ENCODE measurements at regions of chr6 and their contacts with region 1.

Region 1: DNA sequence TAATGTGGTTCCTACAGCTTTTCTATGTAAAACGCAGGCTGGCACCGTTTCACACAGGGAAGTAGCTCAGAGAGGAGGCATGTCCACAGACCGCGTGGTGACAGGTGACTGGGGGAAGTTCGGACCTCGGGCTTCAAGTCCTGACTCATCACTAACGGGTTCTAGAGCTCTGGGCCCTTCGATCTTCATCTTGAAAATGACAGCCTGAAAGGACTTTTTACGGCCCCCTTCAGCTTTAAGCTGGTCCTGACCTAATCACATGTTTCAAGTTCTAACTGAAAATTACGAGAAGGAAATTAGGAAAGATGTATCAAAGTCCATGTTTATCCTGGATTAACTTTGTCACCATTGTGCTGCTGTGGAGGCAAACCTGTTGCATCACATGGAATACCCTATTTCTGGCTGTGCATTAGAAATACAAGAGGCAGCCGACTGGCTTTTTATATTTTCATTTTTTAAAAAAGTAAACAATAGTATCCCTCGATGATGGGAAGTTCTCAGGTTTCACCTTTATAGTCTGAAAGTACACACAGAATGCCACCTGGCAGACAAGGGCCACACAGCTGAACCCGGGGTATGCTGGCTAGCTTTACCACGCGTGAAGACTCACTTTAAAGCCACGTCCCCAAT is 2.0 kb downstream of the MAN1A1 start:
- DNase-seq: peak; percentile 12
- H3K4me3 Mint-ChIP-seq: peak overlapping the region; percentile 88
- H3K27ac Mint-ChIP-seq: peak overlapping the region; percentile 88
- H3K4me1 Mint-ChIP-seq: peaks cover 57% of the 10 kb centered on the region
- H3K27me3 Mint-ChIP-seq: no peaks in the 10 kb centered on the region

Region 2: GRCh38 chr6:119313937-119314884 is 33.4 kb before region 1 on chr6:
- CTCF ChIA-PET with region 1: interaction called, 19 read pairs
- POLR2A ChIA-PET with region 1: interaction called, 3 read pairs
- DNase-seq: peak; percentile 48
- H3K4me3 Mint-ChIP-seq: peak overlapping the region; percentile 37
- H3K27ac Mint-ChIP-seq: peak overlapping the region; percentile 91
- H3K4me1 Mint-ChIP-seq: peaks cover 61% of the 10 kb centered on the region
- H3K27me3 Mint-ChIP-seq: no peaks in the 10 kb centered on the region

Region 3: DNA sequence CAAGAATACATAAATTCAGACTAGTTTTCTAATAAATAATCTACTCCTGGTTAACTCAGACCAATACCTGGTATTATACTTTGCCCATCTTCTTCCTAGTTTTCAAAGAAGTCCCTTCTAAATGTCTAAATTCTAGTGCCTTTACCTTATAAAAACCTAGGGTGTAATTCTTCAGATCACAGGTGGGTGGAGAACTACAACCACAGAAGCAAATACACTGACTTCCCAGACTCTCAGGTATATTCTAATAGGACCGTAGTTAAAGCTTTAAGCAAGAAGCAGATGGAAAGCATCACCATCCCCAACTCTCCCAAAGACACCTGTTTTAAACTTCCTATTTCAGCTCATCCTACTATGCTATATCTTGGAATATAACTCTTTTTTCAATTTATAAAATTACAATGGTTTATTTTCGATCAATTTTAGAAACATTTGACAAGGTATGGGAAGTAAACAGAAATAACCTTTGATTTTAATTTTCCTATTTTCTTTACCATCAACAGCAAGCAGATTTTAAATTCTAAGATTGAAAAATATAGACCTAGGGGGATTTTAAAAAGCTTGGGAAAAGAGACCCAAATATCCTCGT is 13.8 kb before region 1 on chr6:
- CTCF ChIA-PET with region 1: interaction called, 12 read pairs
- POLR2A ChIA-PET with region 1: no interaction called
- DNase-seq: peak; percentile 22
- H3K4me3 Mint-ChIP-seq: no peak overlapping the region
- H3K27ac Mint-ChIP-seq: no peak overlapping the region
- H3K4me1 Mint-ChIP-seq: peaks cover 40% of the 10 kb centered on the region
- H3K27me3 Mint-ChIP-seq: no peaks in the 10 kb centered on the region

Region 4: DNA sequence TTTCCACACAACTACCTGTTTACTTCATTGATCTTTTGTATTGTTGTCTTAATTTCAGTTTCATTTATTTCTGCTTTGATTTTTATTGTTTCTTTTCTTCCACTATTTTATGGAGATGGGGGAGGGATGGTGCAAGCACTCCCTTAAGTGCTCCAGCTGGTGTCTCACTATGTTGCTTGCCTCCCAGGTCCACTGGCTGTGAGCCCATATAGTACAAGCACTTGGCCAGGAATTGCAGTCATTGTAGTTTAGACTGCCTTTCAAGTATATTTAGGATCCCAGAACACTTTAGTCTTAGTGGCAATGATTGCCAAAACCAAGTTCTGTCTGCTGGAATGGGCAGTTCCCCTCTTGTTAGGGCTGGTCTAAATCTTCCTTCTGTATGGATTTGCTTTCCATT is 36.9 kb after region 1 on chr6:
- CTCF ChIA-PET with region 1: no interaction called
- POLR2A ChIA-PET with region 1: no interaction called
- DNase-seq: no peak
- H3K4me3 Mint-ChIP-seq: no peak overlapping the region
- H3K27ac Mint-ChIP-seq: no peak overlapping the region
- H3K4me1 Mint-ChIP-seq: no peaks in the 10 kb centered on the region
- H3K27me3 Mint-ChIP-seq: no peaks in the 10 kb centered on the region